Pancreas (tissue), 10 donors: ENCODE measurements at regions of chr4 and their contacts with region 1.

Region 1: DNA sequence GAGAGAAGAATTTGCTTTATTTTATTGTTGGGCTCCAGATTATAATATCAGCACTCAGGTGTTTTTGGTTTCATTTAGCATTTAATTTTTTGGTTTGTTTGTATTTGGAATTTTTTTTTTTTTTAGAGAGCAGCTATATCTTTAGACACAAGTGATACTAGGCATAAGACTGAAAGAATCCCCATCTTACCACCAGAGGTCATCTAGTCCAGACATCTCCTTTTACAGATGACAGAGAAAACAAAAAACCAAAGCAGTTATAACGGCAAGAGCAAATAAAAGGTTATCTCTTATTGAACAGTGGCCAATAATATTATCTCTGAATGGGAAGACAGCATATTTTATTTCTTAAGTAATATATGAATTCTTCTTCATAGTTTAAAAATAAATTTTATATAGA is 22.8 kb downstream of the USP38 start:
- DNase-seq: no peak
- ATAC-seq: peak in 2 of 4 donors; percentile 46 to 52
- H3K4me3 ChIP-seq: no peak overlapping the region
- H3K27ac ChIP-seq: no peak overlapping the region
- H3K4me1 ChIP-seq: peaks cover 0 to 6% (median 0%) of the 10 kb centered on the region in 3 donors
- H3K27me3 ChIP-seq: no peaks in the 10 kb centered on the region
- CTCF ChIP-seq: no peak

Region 2: DNA sequence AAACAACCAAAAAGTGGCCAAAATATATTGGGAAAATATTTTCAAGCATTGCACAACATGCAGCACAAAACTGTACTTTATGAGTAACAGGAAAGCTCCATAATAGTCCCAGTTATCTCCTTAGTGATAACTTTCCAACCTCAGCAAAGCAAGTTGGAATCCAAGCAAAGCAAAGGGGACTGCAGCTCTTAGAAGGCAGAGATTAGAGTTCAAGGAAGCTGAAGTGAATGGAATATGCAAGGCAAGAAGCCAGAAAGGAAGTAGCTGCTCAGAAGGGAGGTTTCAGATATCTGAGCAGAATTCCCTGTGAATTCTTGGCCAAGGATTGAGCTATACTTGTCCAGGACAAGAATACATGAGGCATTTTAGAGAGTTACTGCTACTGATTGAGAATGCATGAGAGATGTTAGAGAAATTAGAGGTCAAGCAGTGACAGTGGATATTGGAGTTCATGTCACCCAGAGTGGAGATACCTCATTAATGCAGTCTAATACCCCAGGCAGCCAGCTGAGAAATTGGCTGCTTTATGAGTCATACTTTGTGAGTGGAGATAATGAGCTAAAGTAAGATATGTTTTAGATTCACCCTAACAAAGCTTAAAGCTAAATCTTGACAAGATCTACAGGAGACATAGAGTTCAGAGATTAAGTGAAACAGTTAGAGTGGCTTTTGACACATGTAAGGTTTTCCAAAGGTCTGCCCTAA is 464.3 kb before region 1 on chr4:
- intact Hi-C with region 1: no loop called
- DNase-seq: no peak
- ATAC-seq: peak in 2 of 4 donors; percentile 27 to 35
- H3K4me3 ChIP-seq: no peak overlapping the region
- H3K27ac ChIP-seq: no peak overlapping the region
- H3K4me1 ChIP-seq: no peaks in the 10 kb centered on the region
- H3K27me3 ChIP-seq: no peaks in the 10 kb centered on the region
- CTCF ChIP-seq: no peak

Region 3: GRCh38 chr4:143482840-143483239 is 275.3 kb after region 1 on chr4:
- intact Hi-C with region 1: loop called in 1 of 3 experiments (anchors 10 kb)
- DNase-seq: peak in 1 of 6 donors; percentile 18
- ATAC-seq: peak in 3 of 4 donors; percentile 73 to 84 (median 74)
- H3K4me3 ChIP-seq: no peak overlapping the region
- H3K27ac ChIP-seq: no peak overlapping the region
- H3K4me1 ChIP-seq: no peaks in the 10 kb centered on the region
- H3K27me3 ChIP-seq: no peaks in the 10 kb centered on the region
- CTCF ChIP-seq: peak in 3 of 4 donors; percentile 8 to 32 (median 28)